Left cardiac atrium (tissue), 4 donors: ENCODE measurements at regions of chr12 and their contacts with region 1.

Region 1: DNA sequence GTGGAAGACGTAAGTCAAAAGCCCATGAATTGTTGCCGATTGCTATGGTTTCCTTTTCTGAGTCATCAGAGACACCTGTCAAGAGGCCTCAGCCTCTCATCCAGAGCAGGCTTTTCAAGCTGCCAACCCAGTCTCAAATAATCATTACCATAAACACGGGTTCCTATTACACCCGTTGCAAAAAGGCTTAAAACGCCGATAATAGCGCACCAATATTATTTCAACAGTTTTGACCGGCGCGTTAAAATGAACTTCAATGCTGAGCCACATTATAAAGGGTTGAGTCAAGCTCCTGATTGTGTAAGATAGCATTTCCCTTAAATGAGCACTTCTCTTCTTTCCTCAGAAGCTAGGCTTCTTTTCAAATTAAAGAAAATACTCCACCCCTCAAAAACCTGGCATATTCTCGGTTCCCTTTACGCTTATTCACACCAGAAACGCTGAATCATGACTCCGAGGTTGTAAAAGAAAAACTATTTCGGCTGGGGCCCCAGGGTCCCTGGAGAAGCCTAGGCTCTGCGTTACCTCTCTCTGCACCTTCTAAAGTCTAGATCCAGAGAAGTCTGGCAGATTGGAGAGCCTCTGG is 1.4 kb downstream of the TMTC1 start:
- DNase-seq: no peak
- ATAC-seq: peak; percentile 28 to 67

Region 2: GRCh38 chr12:29562167-29562776 is 220.1 kb before region 1 on chr12:
- intact Hi-C with region 1: loop called in 1 of 2 experiments (anchors 5 kb)
- DNase-seq: peak; percentile 60
- ATAC-seq: peak; percentile 76 to 95

Region 3: DNA sequence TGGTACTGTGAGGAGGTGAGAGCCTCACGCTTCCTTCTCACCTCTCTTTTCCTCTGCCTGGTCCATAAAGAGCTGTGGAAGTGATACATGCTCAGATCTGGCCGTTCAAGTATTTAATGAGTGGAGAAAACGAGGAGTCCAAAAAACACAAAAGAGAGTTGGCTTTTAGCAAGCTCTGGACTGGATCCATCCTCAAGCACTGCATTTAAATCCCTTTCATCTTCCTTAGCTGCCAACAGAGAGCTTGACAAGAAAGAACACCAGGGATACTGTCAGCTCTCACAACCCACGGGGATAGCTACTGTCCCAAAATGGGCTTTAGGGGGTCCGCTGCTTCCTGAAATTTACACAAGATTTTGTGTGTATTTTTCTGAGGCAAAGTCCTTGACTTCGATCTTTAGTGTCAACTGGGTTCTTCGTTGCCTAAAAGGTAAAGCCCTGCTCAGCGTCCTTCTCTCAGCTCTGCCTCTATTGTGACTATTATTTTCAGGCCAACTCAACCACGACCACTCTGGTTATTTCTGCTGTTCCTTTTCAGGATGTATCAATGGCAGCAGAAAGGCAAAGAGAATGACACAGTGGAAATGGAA is 119.5 kb before region 1 on chr12:
- intact Hi-C with region 1: loop called (anchors 10 kb)
- DNase-seq: no peak
- ATAC-seq: peak; percentile 68 to 83

Region 4: DNA sequence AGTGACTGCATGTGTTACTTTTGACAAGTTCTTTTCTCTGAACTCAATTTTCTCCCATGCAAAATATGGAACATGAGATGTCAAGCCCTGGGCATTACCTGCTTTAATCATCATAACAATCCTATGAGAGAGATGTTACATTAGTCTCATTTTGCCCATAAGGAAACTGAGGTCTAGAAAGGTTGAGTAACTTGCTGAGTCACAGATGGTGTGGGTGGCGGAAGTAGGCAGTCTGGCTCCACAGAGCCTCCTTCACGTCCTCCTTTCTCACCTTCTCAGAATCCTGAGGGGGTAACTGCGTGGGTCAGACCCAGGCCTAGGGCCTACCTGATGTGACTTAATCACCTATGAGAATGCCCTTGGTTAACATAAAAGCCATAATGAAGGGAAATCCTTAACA is 49.3 kb before region 1 on chr12:
- intact Hi-C with region 1: loop called in 1 of 2 experiments (anchors 5 kb)
- DNase-seq: no peak
- ATAC-seq: no peak

Region 5: DNA sequence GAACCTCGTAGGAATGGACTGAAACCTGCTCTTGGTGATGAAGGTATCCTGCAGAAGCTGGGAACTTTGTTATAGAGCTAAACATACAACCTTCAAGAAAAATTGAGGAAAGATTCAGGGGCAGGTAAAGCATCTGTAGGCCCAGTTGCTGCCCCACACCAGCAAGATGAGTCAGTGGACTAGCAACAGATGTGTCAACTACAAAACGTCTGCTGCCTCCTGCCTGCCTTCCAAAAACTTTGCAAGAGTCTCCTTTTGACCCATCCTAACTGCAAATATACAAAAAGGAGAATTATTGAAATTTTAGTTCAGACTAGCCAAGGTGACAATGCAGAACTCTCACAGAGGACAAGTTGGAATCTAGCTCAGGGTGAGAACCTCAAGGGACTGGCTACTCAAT is 62.3 kb after region 1 on chr12:
- intact Hi-C with region 1: no loop called
- DNase-seq: no peak
- ATAC-seq: no peak